AG04450 (cell line): ENCODE measurements at regions of chr6 and their contacts with region 1.

Region 1: DNA sequence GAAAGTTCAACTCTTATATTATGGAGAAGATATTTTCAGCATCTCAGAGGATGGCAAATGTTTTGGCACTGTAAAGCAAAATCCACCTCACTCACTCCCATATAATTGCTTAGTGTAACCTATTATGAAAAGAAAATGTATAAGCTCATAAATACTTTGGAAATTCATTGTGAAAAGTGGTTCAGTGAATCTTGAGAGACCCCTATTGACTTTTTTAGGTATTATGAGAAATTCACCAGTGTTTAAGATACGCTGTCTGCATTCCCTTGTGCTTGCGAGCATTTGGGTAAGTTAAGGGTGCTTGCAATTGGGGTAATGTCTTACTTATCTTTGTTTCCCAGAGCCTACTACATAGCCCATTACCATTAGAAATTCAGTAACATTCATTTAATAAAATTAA is 66.3 kb upstream of the BMP5 start:
- DNase-seq: no peak
- H3K4me3 ChIP-seq: no peak overlapping the region
- H3K27ac ChIP-seq: no peak overlapping the region
- H3K27me3 ChIP-seq: no peaks in the 10 kb centered on the region
- CTCF ChIP-seq: peak; percentile 56

Region 2: DNA sequence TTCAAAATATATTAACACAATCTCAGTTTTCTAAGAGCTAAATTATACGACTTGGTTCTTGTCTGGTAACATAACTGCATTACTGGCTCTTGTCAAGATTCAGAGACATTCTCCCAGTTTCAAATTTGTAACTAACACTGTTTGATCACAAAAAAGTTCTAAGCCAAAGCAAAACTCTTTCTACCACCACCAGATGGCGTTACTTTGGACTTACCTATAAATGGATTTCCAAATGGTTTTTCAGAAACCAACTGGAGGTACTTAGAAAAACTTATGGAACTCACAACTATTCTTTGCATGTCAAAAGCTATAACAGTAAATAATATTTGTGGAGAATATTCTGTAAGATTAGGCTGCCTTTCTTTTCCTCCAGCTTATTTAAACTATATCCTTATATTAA is 648.6 kb before region 1 on chr6:
- CTCF ChIA-PET with region 1: interaction called, 10 read pairs
- POLR2A ChIA-PET with region 1: no interaction called
- DNase-seq: no peak
- H3K4me3 ChIP-seq: no peak overlapping the region
- H3K27ac ChIP-seq: no peak overlapping the region
- H3K27me3 ChIP-seq: no peaks in the 10 kb centered on the region
- CTCF ChIP-seq: peak; percentile 47

Region 3: DNA sequence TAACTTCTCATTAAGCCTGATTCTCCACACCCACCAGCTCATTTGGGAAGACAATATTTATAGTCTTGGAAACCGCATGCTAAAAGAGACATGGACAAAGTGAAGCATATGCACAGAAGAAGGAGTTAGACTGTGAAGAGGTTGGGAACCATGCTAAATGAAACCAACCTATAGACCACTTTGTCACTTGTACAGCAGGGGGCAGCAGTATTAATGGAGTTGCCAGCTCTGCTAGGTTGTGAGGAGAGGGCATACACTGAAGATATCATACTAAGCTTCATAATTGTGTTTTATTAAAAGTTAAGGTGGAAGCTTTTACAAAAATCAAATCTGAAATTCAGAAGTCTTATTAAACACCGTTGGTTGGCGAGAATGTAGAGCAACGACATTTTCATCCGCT is 324.4 kb before region 1 on chr6:
- CTCF ChIA-PET with region 1: interaction called, 14 read pairs
- POLR2A ChIA-PET with region 1: no interaction called
- DNase-seq: no peak
- H3K4me3 ChIP-seq: no peak overlapping the region
- H3K27ac ChIP-seq: no peak overlapping the region
- H3K27me3 ChIP-seq: no peaks in the 10 kb centered on the region
- CTCF ChIP-seq: peak; percentile 68

Region 4: GRCh38 chr6:55694148-55694547 is 247.6 kb before region 1 on chr6:
- CTCF ChIA-PET with region 1: no interaction called
- POLR2A ChIA-PET with region 1: no interaction called
- DNase-seq: peak; percentile 68
- H3K4me3 ChIP-seq: no peak overlapping the region
- H3K27ac ChIP-seq: no peak overlapping the region
- H3K27me3 ChIP-seq: no peaks in the 10 kb centered on the region
- CTCF ChIP-seq: no peak

Region 5: DNA sequence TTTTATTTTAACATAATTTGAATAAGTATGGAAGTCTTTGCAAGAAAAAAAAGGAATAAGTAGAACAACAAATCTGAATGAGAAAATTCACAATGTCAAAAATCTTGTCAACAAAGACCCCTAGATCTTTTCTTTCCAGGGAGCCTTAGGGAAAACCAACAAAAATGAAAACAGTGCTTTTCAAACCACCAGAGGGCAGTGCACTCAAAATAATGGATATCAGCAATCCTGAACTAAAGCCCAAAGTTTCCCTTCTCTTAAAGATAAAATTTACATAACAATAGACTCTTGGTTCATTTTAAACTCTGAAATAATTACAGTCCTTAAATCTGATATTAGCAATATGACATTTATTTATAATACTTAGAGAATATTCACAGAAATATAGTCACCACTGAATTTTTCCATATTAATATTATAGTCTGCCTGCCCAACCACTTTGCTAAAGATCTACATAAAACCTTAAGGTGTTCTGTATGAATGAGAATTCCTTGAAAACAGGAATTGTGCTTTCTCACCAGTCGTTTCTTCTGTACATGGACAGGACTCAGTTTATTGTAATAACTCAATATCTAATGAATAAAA is 39.0 kb after region 1 on chr6:
- CTCF ChIA-PET with region 1: no interaction called
- POLR2A ChIA-PET with region 1: no interaction called
- DNase-seq: no peak
- H3K4me3 ChIP-seq: no peak overlapping the region
- H3K27ac ChIP-seq: no peak overlapping the region
- H3K27me3 ChIP-seq: no peaks in the 10 kb centered on the region
- CTCF ChIP-seq: peak; percentile 70